T-cell (primary cell): ENCODE measurements at regions of chr2 and their contacts with region 1.

Region 1: GRCh38 chr2:43251171-43251731 is 24.8 kb upstream of the ZFP36L2 start:
- DNase-seq: no peak
- ATAC-seq: no peak
- H3K4me3 ChIP-seq: no peak overlapping the region
- H3K4me3 Mint-ChIP-seq: no peak overlapping the region
- H3K27ac ChIP-seq: no peak overlapping the region
- H3K27ac Mint-ChIP-seq: no peak overlapping the region
- H3K4me1 ChIP-seq: no peaks in the 10 kb centered on the region
- H3K4me1 Mint-ChIP-seq: peaks cover 0 to 5% (median 0%) of the 10 kb centered on the region in 3 donors
- H3K27me3 ChIP-seq: no peaks in the 10 kb centered on the region
- H3K27me3 Mint-ChIP-seq: no peaks in the 10 kb centered on the region

Region 2: GRCh38 chr2:43003702-43004101 is 247.5 kb before region 1 on chr2:
- CTCF ChIA-PET with region 1: no interaction called
- POLR2A ChIA-PET with region 1: interaction called in 1 of 2 experiments, 16 read pairs
- DNase-seq: peak in 1 of 35 experiments; percentile 13
- ATAC-seq: no peak
- H3K4me3 ChIP-seq: no peak overlapping the region
- H3K4me3 Mint-ChIP-seq: no peak overlapping the region
- H3K27ac ChIP-seq: no peak overlapping the region
- H3K27ac Mint-ChIP-seq: no peak overlapping the region
- H3K4me1 ChIP-seq: no peaks in the 10 kb centered on the region
- H3K4me1 Mint-ChIP-seq: no peaks in the 10 kb centered on the region
- H3K27me3 ChIP-seq: peaks cover 0 to 18% of the 10 kb centered on the region in 2 experiments
- H3K27me3 Mint-ChIP-seq: peaks cover 7% of the 10 kb centered on the region in 2 donors